GM12878 (cell line): ENCODE measurements at regions of chr2 and their contacts with region 1.

Region 1: GRCh38 chr2:16756831-16757644 is 91.4 kb upstream of the CYRIA start:
- DNase-seq: peak; percentile 26
- ATAC-seq: peak; percentile 99
- H3K4me3 ChIP-seq: no peak overlapping the region
- H3K27ac ChIP-seq: no peak overlapping the region
- H3K4me1 ChIP-seq: no peaks in the 10 kb centered on the region
- H3K27me3 ChIP-seq: peaks cover 6% of the 10 kb centered on the region in 2 experiments; a peak in 3 of 4 replicates
- CTCF ChIP-seq: peak; percentile 76 to 95 (median 76)
- EP300 ChIP-seq: no peak
- POLR2A ChIP-seq: no peak
- RAD21 ChIP-seq: peak; percentile 99

Region 2: DNA sequence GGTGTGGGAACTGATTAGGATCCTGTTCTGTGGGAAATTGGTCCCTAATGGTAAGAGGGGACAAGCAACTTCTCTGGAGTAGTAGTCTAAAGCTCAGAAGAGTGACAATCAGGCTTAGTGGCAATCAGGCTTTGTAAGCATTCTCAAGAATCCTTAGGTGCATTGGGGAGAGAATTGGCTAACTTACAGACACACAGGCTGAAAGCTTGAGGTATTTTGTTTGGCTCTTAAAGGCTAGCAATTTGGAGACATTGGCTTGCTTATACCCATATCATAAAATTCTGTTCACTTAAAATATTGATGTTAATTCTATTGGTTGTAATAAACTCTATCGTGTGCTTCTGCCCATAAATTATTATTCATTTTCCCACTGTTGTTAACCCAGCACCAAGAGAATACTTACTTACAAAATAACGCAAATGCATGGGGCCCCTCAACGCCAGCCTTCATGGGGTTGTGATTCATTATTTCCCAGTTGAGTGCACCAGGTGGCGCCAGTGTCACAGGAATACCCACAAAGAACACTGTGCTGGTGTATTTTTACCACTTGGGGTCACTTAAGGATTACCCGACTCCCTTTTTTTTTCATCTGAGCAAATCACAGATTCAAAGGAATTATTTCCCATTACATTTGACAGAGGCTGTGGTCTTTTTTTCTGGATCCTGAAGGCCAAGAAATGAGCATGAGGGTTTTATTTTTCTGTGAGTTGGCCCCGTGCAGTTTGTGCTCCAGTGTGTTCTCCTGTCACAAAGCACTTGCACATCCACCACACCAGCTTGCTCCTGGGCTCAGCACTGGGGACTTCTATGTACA is 1119.9 kb before region 1 on chr2:
- CTCF ChIA-PET with region 1: no interaction called
- POLR2A ChIA-PET with region 1: no interaction called
- RAD21 ChIA-PET with region 1: no interaction called
- SMC1A ChIA-PET with region 1: no interaction called
- in situ Hi-C with region 1: loop called (anchors 10 kb)
- intact Hi-C with region 1: no loop called
- DNase-seq: no peak
- ATAC-seq: peak; percentile 99
- H3K4me3 ChIP-seq: no peak overlapping the region
- H3K27ac ChIP-seq: no peak overlapping the region
- H3K4me1 ChIP-seq: no peaks in the 10 kb centered on the region
- H3K27me3 ChIP-seq: no peaks in the 10 kb centered on the region
- CTCF ChIP-seq: peak; percentile 72 to 97 (median 89); a peak in 5 of 6 replicates
- EP300 ChIP-seq: no peak
- POLR2A ChIP-seq: no peak
- RAD21 ChIP-seq: peak; percentile 89

Region 3: DNA sequence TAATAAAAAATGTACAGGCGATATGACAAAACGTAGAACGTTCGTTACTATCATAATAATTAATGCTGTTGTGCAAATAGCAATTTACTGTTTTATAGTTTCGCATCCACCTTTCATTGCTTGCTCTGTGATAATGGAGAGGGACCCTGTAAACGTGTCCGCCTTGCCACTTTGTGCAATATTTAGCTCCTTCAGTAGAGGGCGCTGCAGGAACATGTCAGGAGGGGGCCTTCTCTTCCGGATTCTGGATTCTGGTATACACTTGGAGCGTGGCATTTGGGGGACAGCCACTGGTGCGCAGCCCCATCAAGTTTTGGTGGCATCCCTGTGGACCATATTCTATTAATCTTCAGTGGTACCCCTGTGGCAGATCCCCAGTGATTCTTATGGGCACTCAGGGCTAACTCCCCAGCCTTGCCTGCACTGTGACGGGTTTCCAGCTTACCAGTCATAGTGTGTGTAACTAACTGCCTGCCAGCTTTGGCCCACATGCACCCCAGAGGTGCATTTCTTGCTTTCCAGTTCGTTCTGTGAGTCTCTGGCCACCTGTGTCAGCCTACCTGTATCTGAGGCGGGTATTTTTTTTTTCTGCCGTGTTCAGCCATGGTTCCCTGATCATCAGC is 231.7 kb before region 1 on chr2:
- CTCF ChIA-PET with region 1: interaction called, 39 read pairs
- POLR2A ChIA-PET with region 1: no interaction called
- RAD21 ChIA-PET with region 1: interaction called, 22 read pairs
- SMC1A ChIA-PET with region 1: interaction called, 27 read pairs
- in situ Hi-C with region 1: no loop called
- intact Hi-C with region 1: loop called (anchors 2 kb)
- DNase-seq: no peak
- ATAC-seq: peak; percentile 80
- H3K4me3 ChIP-seq: no peak overlapping the region
- H3K27ac ChIP-seq: no peak overlapping the region
- H3K4me1 ChIP-seq: no peaks in the 10 kb centered on the region
- H3K27me3 ChIP-seq: no peaks in the 10 kb centered on the region; a peak in 1 of 4 replicates
- CTCF ChIP-seq: peak; percentile 52 to 64 (median 58)
- EP300 ChIP-seq: no peak
- POLR2A ChIP-seq: no peak
- RAD21 ChIP-seq: peak; percentile 74

Region 4: DNA sequence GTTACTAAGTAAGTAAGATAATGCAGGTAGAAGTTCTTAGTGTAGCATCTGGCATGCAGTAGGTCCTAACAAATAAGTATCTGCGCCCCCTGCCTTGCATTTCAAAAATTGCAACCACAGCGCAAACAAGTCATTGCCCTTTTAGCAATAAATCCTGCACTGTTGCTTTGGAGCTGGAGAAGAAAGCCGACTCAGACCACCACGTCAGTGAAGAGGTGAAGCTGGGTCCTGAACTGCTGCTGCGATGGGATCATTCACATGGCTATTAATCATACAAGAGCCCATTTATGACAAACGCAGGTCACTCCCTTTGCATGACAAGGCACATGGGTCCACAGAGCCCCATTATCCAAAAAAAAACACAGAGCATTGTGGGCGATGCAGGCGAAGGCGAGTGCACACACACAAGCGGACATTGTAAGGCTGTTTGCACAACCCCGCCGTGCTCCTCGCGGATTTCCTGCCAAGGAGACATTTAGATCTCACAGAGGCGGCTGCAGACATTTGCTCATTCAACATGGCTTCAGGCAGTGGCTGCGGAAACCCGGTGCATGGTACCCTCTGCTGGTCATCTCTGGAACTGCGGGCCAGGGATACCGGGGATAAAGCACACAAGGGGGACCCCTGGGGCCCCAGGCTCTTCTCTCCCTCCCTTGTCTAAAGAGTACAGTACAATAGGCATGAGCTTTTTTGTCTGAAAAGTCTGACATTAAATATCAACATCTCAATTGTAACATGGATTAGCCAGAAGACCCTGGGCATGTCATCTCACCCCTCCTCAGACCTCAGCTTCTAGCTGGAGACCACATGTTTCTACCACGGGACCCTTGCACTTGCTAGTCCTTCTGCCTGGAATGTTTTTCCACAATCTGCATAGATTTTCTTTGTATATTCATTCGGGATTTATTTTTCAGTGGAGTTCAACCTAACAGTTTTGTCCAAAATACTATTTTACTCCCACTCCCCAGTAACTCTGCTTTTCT is 148.1 kb before region 1 on chr2:
- CTCF ChIA-PET with region 1: interaction called, 109 read pairs
- POLR2A ChIA-PET with region 1: no interaction called
- RAD21 ChIA-PET with region 1: interaction called, 59 read pairs
- SMC1A ChIA-PET with region 1: interaction called, 65 read pairs
- in situ Hi-C with region 1: loop called (anchors 5 kb)
- intact Hi-C with region 1: loop called (anchors 1 kb)
- DNase-seq: peak; percentile 16
- ATAC-seq: peak; percentile 97
- H3K4me3 ChIP-seq: peak overlapping the region; percentile 44
- H3K27ac ChIP-seq: no peak overlapping the region
- H3K4me1 ChIP-seq: no peaks in the 10 kb centered on the region
- H3K27me3 ChIP-seq: no peaks in the 10 kb centered on the region
- CTCF ChIP-seq: peak; percentile 93 to 99 (median 94)
- EP300 ChIP-seq: no peak
- POLR2A ChIP-seq: no peak
- RAD21 ChIP-seq: peak; percentile 74

Region 5: GRCh38 chr2:16625201-16625729 is 131.8 kb before region 1 on chr2:
- CTCF ChIA-PET with region 1: interaction called, 83 read pairs
- POLR2A ChIA-PET with region 1: no interaction called
- RAD21 ChIA-PET with region 1: interaction called, 30 read pairs
- SMC1A ChIA-PET with region 1: interaction called, 56 read pairs
- in situ Hi-C with region 1: no loop called
- intact Hi-C with region 1: no loop called
- DNase-seq: no peak
- ATAC-seq: peak; percentile 43
- H3K4me3 ChIP-seq: no peak overlapping the region
- H3K27ac ChIP-seq: no peak overlapping the region
- H3K4me1 ChIP-seq: peaks cover 16% of the 10 kb centered on the region
- H3K27me3 ChIP-seq: peaks cover 0 to 11% of the 10 kb centered on the region in 2 experiments
- CTCF ChIP-seq: no peak
- EP300 ChIP-seq: no peak
- POLR2A ChIP-seq: no peak
- RAD21 ChIP-seq: no peak

Region 6: GRCh38 chr2:16656784-16657391 is 100.2 kb before region 1 on chr2:
- CTCF ChIA-PET with region 1: interaction called, 14 read pairs
- POLR2A ChIA-PET with region 1: interaction called, 4 read pairs
- RAD21 ChIA-PET with region 1: interaction called, 9 read pairs
- SMC1A ChIA-PET with region 1: interaction called, 16 read pairs
- in situ Hi-C with region 1: no loop called
- intact Hi-C with region 1: no loop called
- DNase-seq: peak; percentile 83
- ATAC-seq: peak; percentile 67
- H3K4me3 ChIP-seq: peak overlapping the region; percentile 3; the same call in 1 of the 2 replicates
- H3K27ac ChIP-seq: peak overlapping the region; percentile 68
- H3K4me1 ChIP-seq: peaks cover 48% of the 10 kb centered on the region
- H3K27me3 ChIP-seq: peaks cover 0 to 2% of the 10 kb centered on the region in 2 experiments; a peak in 2 of 4 replicates
- CTCF ChIP-seq: no peak
- EP300 ChIP-seq: peak; percentile 62 to 73; a peak in 3 of 4 replicates
- POLR2A ChIP-seq: no peak
- RAD21 ChIP-seq: no peak

Region 7: DNA sequence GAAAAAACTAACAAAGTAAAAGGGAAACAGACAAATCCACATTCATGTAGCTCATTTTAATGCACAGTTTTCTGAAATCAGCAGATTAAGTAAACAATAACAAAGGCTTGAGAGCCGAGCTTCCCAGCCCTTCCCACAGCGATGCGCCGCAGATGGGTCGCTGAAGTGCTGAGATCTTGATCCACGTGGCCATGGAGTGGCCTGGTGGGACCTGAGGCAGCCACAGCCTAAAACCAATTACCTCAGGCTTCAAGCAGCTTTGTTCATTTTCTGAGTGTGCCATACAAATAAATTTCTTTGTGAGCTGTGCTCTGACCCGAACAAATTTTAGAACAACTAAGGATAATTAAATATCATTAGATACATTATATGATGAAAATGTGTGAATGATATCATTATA is 65.8 kb before region 1 on chr2:
- CTCF ChIA-PET with region 1: no interaction called
- POLR2A ChIA-PET with region 1: no interaction called
- RAD21 ChIA-PET with region 1: no interaction called
- SMC1A ChIA-PET with region 1: no interaction called
- in situ Hi-C with region 1: no loop called
- intact Hi-C with region 1: no loop called
- DNase-seq: no peak
- ATAC-seq: no peak
- H3K4me3 ChIP-seq: no peak overlapping the region
- H3K27ac ChIP-seq: no peak overlapping the region
- H3K4me1 ChIP-seq: no peaks in the 10 kb centered on the region
- H3K27me3 ChIP-seq: no peaks in the 10 kb centered on the region; a peak in 1 of 4 replicates
- CTCF ChIP-seq: no peak
- EP300 ChIP-seq: no peak
- POLR2A ChIP-seq: no peak
- RAD21 ChIP-seq: no peak

Region 8: DNA sequence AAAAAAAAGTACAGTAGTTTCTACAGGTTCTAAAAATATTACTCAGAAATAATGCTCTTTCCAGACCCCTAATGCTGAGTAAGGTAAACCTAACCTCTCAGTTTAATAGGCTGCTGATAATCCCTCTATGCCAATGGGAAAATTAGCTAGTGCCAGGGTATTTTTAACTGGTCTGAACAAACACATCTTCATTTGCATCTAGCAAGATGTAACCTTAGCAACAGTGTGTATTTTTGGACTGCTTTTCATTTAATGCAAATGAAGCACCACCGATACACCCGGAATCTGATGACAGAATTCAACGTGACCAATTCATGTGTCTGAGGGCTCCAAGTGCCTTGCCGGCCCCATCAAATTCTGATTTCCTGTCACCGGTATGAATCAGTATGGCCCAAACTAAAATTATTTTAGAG is 44.0 kb before region 1 on chr2:
- CTCF ChIA-PET with region 1: interaction called, 4 read pairs
- POLR2A ChIA-PET with region 1: interaction called, 3 read pairs
- RAD21 ChIA-PET with region 1: interaction called, 10 read pairs
- SMC1A ChIA-PET with region 1: interaction called, 6 read pairs
- in situ Hi-C with region 1: no loop called
- intact Hi-C with region 1: no loop called
- DNase-seq: no peak
- ATAC-seq: peak; percentile 92
- H3K4me3 ChIP-seq: no peak overlapping the region
- H3K27ac ChIP-seq: no peak overlapping the region
- H3K4me1 ChIP-seq: peaks cover 2% of the 10 kb centered on the region; the same call in 1 of the 2 replicates
- H3K27me3 ChIP-seq: 0 out of 4 replicates have a peak, but pooled peaks cover 0 to 2% of the 10 kb centered on the region in 2 experiments
- CTCF ChIP-seq: no peak
- EP300 ChIP-seq: peak; percentile 27 to 54; a peak in 2 of 4 replicates
- POLR2A ChIP-seq: no peak
- RAD21 ChIP-seq: no peak

Region 9: GRCh38 chr2:16784652-16785051 is 27.6 kb after region 1 on chr2:
- CTCF ChIA-PET with region 1: no interaction called
- POLR2A ChIA-PET with region 1: no interaction called
- RAD21 ChIA-PET with region 1: no interaction called
- SMC1A ChIA-PET with region 1: no interaction called
- in situ Hi-C with region 1: no loop called
- intact Hi-C with region 1: no loop called
- DNase-seq: no peak
- ATAC-seq: no peak
- H3K4me3 ChIP-seq: no peak overlapping the region
- H3K27ac ChIP-seq: no peak overlapping the region
- H3K4me1 ChIP-seq: no peaks in the 10 kb centered on the region
- H3K27me3 ChIP-seq: no peaks in the 10 kb centered on the region
- CTCF ChIP-seq: no peak
- EP300 ChIP-seq: no peak
- POLR2A ChIP-seq: no peak
- RAD21 ChIP-seq: no peak

Region 10: GRCh38 chr2:17540093-17540812 is 783.2 kb after region 1 on chr2 and contains the start of gene VSNL1:
- CTCF ChIA-PET with region 1: no interaction called
- POLR2A ChIA-PET with region 1: no interaction called
- RAD21 ChIA-PET with region 1: no interaction called
- SMC1A ChIA-PET with region 1: no interaction called
- in situ Hi-C with region 1: no loop called
- intact Hi-C with region 1: no loop called
- DNase-seq: no peak
- ATAC-seq: no peak
- H3K4me3 ChIP-seq: peak within 1 kb of the TSS; percentile 14; the same call in 1 of the 2 replicates
- H3K27ac ChIP-seq: no peak within 1 kb of the TSS
- H3K4me1 ChIP-seq: no peaks in the 10 kb centered on the region
- H3K27me3 ChIP-seq: peaks cover 11 to 20% of the 10 kb centered on the region in 2 experiments
- CTCF ChIP-seq: no peak
- EP300 ChIP-seq: no peak
- POLR2A ChIP-seq: no peak
- RAD21 ChIP-seq: no peak
- polyA plus RNA-seq, gene VSNL1: 0.04 to 0.10 TPM